ENCODE measurements at regions of chr4 and their contacts with region 1.

Region 1: GRCh38 chr4:6087673-6088341 is 69.6 kb upstream of the C4orf50 start:
- DNase-seq: peak in 7 of 10 donors; percentile 38 to 72 (median 65)
- H3K4me3 ChIP-seq: no peak overlapping the region
- H3K27ac ChIP-seq: peak overlapping the region in 13 of 59 donors; percentile 1 to 46 (median 15)
- H3K27me3 ChIP-seq: no peaks in the 10 kb centered on the region
- CTCF ChIP-seq: peak in 54 of 56 donors; percentile 30 to 74 (median 54)

Region 2: DNA sequence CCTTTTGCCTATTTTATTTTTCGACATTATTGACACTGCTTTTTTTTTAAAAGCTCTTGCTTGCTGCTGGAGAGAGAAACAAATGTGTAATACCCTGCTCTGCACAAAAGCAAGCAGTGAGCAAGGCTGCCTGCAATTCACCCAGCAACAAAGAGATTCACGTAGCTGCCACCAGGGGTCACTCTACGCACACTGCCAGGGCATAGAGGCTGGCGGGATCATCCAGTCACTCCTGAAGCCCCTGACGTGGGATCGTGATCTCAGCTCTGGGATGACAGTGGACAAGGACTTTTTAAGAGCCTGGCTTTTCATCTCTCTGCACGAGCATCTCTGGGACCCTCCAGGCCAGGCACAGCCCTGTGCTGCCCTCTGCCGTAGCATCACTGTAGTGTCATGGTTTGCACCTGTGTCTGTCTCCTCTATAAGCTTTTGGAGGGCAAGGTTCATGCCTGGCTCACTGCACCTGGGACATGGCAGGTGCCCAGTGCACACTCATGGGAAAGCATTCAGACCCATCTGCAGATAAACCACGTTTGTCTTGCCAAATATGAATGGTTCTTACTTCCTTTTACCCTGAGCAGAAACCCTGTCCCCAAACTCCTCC is 89.4 kb before region 1 on chr4:
- intact Hi-C with region 1: loop called (anchors 5 kb)
- DNase-seq: peak; percentile 54 to 80 (median 76)
- H3K4me3 ChIP-seq: peak overlapping the region in 1 of 59 donors; percentile 7
- H3K27ac ChIP-seq: no peak overlapping the region
- H3K27me3 ChIP-seq: no peaks in the 10 kb centered on the region
- CTCF ChIP-seq: peak; percentile 71 to 98 (median 91)